AG04449 (cell line): ENCODE measurements at regions of chr6 and their contacts with region 1.

Region 1: GRCh38 chr6:133568970-133569889 is 319.7 kb upstream of the TCF21 start:
- DNase-seq: peak; percentile 50
- H3K4me3 ChIP-seq: peak overlapping the region; percentile 46
- CTCF ChIP-seq: peak; percentile 76

Region 2: DNA sequence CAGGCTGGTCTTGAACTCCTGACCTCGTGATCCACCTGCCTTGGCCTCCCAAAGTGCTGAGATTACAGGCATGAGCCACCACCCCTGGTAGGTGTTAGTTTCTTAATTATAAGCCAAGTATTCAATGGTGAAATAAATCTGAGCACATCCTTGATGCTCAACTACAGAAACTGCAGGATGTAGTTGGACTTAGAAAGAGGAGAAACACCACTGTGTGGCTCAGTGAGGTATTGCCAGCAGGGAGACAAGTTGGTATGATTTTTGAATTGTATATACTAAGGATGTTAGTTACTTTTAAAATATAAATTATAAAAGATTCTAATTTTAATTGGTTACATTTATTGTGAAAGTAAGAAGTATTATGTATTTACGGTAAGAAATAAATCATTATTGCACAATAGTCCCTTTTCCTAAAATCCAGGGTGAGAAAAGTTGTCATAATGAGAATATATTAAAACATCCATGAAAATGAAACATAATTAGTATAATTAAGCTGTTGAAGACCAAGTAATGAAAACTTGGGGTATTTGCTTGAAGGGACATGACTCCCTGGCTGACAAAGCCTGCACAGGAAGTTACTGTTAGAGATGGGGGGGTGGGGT is 788.4 kb before region 1 on chr6:
- CTCF ChIA-PET with region 1: no interaction called
- POLR2A ChIA-PET with region 1: no interaction called
- DNase-seq: peak; percentile 5
- H3K4me3 ChIP-seq: no peak overlapping the region
- CTCF ChIP-seq: peak; percentile 32

Region 3: DNA sequence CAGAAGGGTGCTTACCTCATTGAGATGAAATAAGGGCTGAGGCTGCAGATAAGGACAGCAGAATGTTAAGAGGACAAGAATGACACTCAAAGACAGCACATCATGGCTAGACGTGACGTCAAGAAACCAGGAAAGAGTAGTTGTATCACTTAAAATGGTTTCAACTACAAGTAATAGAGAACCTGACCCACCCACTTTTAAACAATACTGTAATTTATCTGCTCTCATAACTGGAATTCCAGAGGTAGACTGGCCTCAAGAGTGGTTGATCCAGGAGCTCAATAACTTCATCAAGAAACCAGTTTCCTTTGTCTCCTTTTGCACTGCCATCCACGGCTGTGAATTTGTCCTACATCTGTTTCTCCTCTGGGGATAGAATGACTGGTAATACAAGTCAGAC is 140.9 kb before region 1 on chr6:
- CTCF ChIA-PET with region 1: no interaction called
- POLR2A ChIA-PET with region 1: no interaction called
- DNase-seq: no peak
- H3K4me3 ChIP-seq: no peak overlapping the region
- CTCF ChIP-seq: no peak

Region 4: GRCh38 chr6:133502441-133503259 is 66.6 kb before region 1 on chr6:
- CTCF ChIA-PET with region 1: no interaction called
- POLR2A ChIA-PET with region 1: no interaction called
- DNase-seq: peak; percentile 90
- H3K4me3 ChIP-seq: no peak overlapping the region
- CTCF ChIP-seq: no peak

Region 5: DNA sequence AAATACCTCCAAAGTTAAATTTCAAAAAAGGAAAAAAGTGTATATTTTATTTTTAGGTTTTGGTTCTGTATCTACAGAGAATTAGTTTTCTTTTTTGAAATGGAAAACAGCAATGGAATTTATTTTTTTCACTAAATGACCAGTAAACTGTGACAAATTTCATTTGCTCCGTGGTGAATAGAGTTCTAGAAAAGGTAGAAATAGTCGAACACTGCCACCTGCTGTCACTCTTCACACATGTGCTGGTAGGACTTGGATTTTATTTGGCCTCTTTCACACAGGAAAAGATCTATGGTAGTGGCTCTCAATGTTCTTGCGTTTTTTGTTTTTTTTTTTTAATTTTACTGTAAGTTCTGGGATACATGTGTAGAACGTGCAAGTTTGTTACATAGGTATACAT is 15.6 kb before region 1 on chr6:
- CTCF ChIA-PET with region 1: interaction called, 26 read pairs
- POLR2A ChIA-PET with region 1: interaction called, 3 read pairs
- DNase-seq: peak; percentile 38
- H3K4me3 ChIP-seq: no peak overlapping the region
- CTCF ChIP-seq: peak; percentile 69

Region 6: GRCh38 chr6:133623621-133624020 is 54.4 kb after region 1 on chr6:
- CTCF ChIA-PET with region 1: interaction called, 13 read pairs
- POLR2A ChIA-PET with region 1: no interaction called
- DNase-seq: no peak
- H3K4me3 ChIP-seq: no peak overlapping the region
- CTCF ChIP-seq: no peak

Region 7: DNA sequence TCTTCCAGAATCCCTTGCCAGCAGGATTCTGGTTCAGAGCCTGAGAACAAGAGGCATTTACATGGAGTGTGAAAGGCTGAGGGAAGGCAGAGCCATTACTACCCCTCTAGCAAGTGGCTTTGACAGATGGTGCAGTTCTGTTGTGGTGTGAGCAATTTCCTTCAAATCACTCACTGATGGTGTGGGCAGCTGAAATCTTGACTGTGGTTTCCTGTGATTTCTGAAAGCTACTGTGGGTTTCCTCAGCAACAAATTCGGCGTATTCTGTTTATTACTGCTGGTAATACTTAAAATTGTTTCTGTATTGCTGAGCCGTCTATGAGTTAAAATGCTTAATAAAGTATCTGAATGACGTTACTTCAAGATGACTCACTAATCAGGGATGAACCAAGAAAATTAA is 138.2 kb after region 1 on chr6:
- CTCF ChIA-PET with region 1: interaction called, 28 read pairs
- POLR2A ChIA-PET with region 1: interaction called, 5 read pairs
- DNase-seq: peak; percentile 90
- H3K4me3 ChIP-seq: no peak overlapping the region
- CTCF ChIP-seq: no peak

Region 8: GRCh38 chr6:133817460-133818047 is 248.3 kb after region 1 on chr6:
- CTCF ChIA-PET with region 1: interaction called, 19 read pairs
- POLR2A ChIA-PET with region 1: no interaction called
- DNase-seq: no peak
- H3K4me3 ChIP-seq: no peak overlapping the region
- CTCF ChIP-seq: peak; percentile 22

Region 9: GRCh38 chr6:133891149-133891926 is 322.1 kb after region 1 on chr6:
- CTCF ChIA-PET with region 1: interaction called, 39 read pairs
- POLR2A ChIA-PET with region 1: interaction called, 4 read pairs
- DNase-seq: no peak
- H3K4me3 ChIP-seq: peak overlapping the region; percentile 71
- CTCF ChIP-seq: no peak